CD8-positive, alpha-beta T cell (primary cell): ENCODE measurements at regions of chr9 and their contacts with region 1.

Region 1: GRCh38 chr9:73149371-73150067 is 2.1 kb upstream of the ANXA1 start:
- DNase-seq: peak in 2 of 9 experiments; percentile 66 to 73
- ATAC-seq: peak; percentile 59
- H3K4me3 ChIP-seq: no peak overlapping the region
- H3K4me3 Mint-ChIP-seq: peak overlapping the region; percentile 54
- H3K27ac ChIP-seq: peak overlapping the region in 1 of 2 experiments; percentile 44
- H3K27ac Mint-ChIP-seq: peak overlapping the region; percentile 69
- H3K4me1 ChIP-seq: peaks cover 51% of the 10 kb centered on the region
- H3K4me1 Mint-ChIP-seq: peaks cover 55% of the 10 kb centered on the region
- H3K27me3 ChIP-seq: no peaks in the 10 kb centered on the region
- H3K27me3 Mint-ChIP-seq: no peaks in the 10 kb centered on the region
- CTCF ChIP-seq: no peak

Region 2: DNA sequence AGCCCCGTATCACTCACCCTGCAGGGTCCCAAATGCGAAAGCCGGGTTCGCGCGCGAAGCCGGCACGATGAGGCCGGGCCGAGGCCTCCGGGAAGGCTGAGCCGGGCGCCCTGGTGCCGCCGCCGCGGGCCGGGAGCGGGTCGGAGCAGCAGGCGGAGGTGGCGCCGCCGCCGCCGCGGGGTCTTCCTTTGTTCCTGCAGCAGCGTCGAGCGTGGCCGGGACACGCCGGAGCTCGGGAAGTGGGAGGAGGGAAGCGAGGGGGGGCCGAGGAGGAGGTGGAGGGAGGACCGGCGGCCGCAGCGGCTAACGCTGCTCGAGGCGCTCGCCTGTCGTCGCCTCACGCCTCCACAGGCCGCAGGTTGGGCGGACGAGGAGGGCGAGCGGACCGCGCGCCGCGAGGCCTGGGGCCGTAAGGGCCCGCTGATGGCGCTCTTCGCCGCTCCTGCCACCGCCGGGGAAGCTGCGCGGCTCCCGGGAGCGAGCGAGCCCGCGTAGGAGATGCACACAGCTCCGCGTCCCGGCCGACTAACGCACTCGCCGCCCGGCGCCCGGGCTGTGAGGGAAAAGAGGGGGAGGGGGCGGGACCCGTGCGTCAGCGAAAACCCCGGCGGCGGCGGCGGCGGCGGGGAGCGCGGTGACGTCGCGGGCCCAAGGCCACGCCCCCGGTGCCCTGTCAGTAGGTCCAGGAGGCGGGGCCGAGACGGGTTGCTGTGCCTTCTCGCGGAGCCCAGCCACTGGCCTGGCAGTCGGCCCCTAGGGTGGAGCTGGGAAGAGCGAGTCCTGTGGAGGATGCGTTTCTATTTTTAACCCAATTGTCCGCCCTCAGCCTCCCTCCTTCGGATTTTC is 784.6 kb before region 1 on chr9 and contains the start of gene ZFAND5:
- CTCF ChIA-PET with region 1: no interaction called
- POLR2A ChIA-PET with region 1: no interaction called
- intact Hi-C with region 1: loop called in 1 of 2 experiments (anchors 2 kb)
- DNase-seq: peak; percentile 86 to 98 (median 94)
- ATAC-seq: peak; percentile 79
- H3K4me3 ChIP-seq: peak within 1 kb of the TSS; percentile 74 to 88
- H3K4me3 Mint-ChIP-seq: peak within 1 kb of the TSS; percentile 91
- H3K27ac ChIP-seq: peak within 1 kb of the TSS; percentile 95 to 97
- H3K27ac Mint-ChIP-seq: peak within 1 kb of the TSS; percentile 98
- H3K4me1 ChIP-seq: peaks cover 41% of the 10 kb centered on the region
- H3K4me1 Mint-ChIP-seq: peaks cover 41% of the 10 kb centered on the region
- H3K27me3 ChIP-seq: no peaks in the 10 kb centered on the region
- H3K27me3 Mint-ChIP-seq: no peaks in the 10 kb centered on the region
- CTCF ChIP-seq: no peak
- total RNA-seq, gene ZFAND5: 355 to 361 TPM

Region 3: GRCh38 chr9:73023025-73023541 is 126.4 kb before region 1 on chr9:
- CTCF ChIA-PET with region 1: no interaction called
- POLR2A ChIA-PET with region 1: no interaction called
- intact Hi-C with region 1: no loop called
- DNase-seq: peak in 7 of 9 experiments; percentile 17 to 71 (median 52)
- ATAC-seq: peak; percentile 46
- H3K4me3 ChIP-seq: no peak overlapping the region
- H3K4me3 Mint-ChIP-seq: no peak overlapping the region
- H3K27ac ChIP-seq: no peak overlapping the region
- H3K27ac Mint-ChIP-seq: no peak overlapping the region
- H3K4me1 ChIP-seq: peaks cover 3% of the 10 kb centered on the region
- H3K4me1 Mint-ChIP-seq: peaks cover 6% of the 10 kb centered on the region
- H3K27me3 ChIP-seq: no peaks in the 10 kb centered on the region
- H3K27me3 Mint-ChIP-seq: peaks cover 19% of the 10 kb centered on the region
- CTCF ChIP-seq: peak; percentile 53

Region 4: DNA sequence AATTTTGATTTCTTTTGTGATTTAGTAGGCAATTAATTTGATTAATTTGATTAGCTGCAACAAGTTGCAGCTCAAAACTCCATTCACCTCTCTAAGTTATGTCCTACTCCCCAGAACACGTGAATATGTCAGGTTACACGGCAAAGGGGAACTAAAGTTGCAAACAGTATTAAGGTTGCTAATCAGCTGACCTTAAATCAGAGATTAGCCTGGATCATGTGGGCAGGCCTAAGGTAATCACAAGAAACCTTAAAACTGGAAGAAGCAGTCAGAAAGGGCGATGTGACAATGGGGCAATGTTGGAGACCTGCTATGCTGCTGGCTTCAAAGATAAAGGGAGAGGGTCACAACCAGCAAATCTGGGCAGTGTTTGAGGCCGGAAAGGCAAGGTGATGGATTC is 45.2 kb before region 1 on chr9:
- CTCF ChIA-PET with region 1: interaction called, 14 read pairs
- POLR2A ChIA-PET with region 1: no interaction called
- intact Hi-C with region 1: loop called in 1 of 2 experiments (anchors 1 kb)
- DNase-seq: no peak
- ATAC-seq: no peak
- H3K4me3 ChIP-seq: no peak overlapping the region
- H3K4me3 Mint-ChIP-seq: no peak overlapping the region
- H3K27ac ChIP-seq: no peak overlapping the region
- H3K27ac Mint-ChIP-seq: no peak overlapping the region
- H3K4me1 ChIP-seq: no peaks in the 10 kb centered on the region
- H3K4me1 Mint-ChIP-seq: no peaks in the 10 kb centered on the region
- H3K27me3 ChIP-seq: no peaks in the 10 kb centered on the region
- H3K27me3 Mint-ChIP-seq: no peaks in the 10 kb centered on the region
- CTCF ChIP-seq: no peak

Region 5: GRCh38 chr9:73162987-73163768 is 13.7 kb after region 1 on chr9:
- CTCF ChIA-PET with region 1: no interaction called
- POLR2A ChIA-PET with region 1: interaction called, 3 read pairs
- intact Hi-C with region 1: loop called in 1 of 2 experiments (anchors 1 kb)
- DNase-seq: peak in 2 of 9 experiments; percentile 35 to 57
- ATAC-seq: peak; percentile 75
- H3K4me3 ChIP-seq: no peak overlapping the region
- H3K4me3 Mint-ChIP-seq: no peak overlapping the region
- H3K27ac ChIP-seq: peak overlapping the region in 1 of 2 experiments; percentile 57
- H3K27ac Mint-ChIP-seq: peak overlapping the region; percentile 76
- H3K4me1 ChIP-seq: peaks cover 22% of the 10 kb centered on the region
- H3K4me1 Mint-ChIP-seq: peaks cover 39% of the 10 kb centered on the region
- H3K27me3 ChIP-seq: no peaks in the 10 kb centered on the region
- H3K27me3 Mint-ChIP-seq: no peaks in the 10 kb centered on the region
- CTCF ChIP-seq: no peak

Region 6: DNA sequence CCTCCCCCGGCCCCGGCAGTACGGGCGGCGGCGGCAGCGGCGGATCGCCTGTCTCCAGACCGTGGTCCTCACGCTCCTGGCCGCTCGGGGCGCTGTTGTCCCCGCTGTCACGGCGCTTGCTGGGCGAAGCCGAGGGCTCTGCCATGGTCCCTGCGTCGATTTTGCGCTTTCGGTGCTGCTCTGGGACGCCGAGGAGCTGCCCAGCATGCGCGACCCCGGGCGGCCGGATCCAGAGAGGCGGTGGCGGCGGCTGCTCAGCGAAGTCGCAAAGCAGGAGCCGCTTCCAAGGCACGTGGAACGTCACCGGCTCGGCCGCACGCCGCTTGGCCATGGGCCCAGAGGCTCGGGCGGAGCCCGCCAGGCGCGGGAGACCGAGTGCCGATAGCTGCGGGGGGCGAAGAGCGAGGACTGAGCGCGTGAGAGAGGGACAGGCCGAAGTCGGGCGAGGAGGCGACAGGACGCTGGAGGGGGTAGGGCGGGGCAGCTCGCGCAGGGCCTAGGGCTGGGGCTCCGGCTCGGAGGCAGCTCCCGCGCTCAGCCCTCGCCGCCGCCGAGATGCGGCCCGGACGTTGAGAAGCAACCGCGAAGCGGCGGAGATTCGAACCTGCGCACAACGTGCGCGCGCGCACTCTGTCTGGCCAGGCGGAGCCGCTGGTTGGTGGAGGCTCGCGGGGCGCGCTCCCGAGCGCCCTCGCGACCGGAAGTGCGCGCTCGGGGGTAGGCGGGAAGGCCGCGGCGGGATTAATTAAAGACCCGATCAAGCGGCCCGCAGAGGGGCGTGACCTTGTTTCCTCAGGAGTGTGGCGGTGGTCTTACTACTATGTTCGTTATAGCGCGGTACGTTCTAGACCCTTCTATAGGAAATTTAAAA is 1803.0 kb after region 1 on chr9 and contains the start of gene C9orf40:
- CTCF ChIA-PET with region 1: no interaction called
- POLR2A ChIA-PET with region 1: no interaction called
- intact Hi-C with region 1: loop called in 1 of 2 experiments (anchors 10 kb)
- DNase-seq: peak; percentile 81 to 93 (median 92)
- ATAC-seq: peak; percentile 88
- H3K4me3 ChIP-seq: peak within 1 kb of the TSS; percentile 86 to 99
- H3K4me3 Mint-ChIP-seq: peak within 1 kb of the TSS; percentile 98
- H3K27ac ChIP-seq: peak within 1 kb of the TSS; percentile 87 to 95
- H3K27ac Mint-ChIP-seq: peak within 1 kb of the TSS; percentile 94
- H3K4me1 ChIP-seq: no peaks in the 10 kb centered on the region
- H3K4me1 Mint-ChIP-seq: peaks cover 20% of the 10 kb centered on the region
- H3K27me3 ChIP-seq: no peaks in the 10 kb centered on the region
- H3K27me3 Mint-ChIP-seq: no peaks in the 10 kb centered on the region
- CTCF ChIP-seq: peak; percentile 77
- total RNA-seq, gene C9orf40: 1.5 to 2.3 TPM